ENCODE measurements at regions of chr16 and their contacts with region 1.

Region 1: DNA sequence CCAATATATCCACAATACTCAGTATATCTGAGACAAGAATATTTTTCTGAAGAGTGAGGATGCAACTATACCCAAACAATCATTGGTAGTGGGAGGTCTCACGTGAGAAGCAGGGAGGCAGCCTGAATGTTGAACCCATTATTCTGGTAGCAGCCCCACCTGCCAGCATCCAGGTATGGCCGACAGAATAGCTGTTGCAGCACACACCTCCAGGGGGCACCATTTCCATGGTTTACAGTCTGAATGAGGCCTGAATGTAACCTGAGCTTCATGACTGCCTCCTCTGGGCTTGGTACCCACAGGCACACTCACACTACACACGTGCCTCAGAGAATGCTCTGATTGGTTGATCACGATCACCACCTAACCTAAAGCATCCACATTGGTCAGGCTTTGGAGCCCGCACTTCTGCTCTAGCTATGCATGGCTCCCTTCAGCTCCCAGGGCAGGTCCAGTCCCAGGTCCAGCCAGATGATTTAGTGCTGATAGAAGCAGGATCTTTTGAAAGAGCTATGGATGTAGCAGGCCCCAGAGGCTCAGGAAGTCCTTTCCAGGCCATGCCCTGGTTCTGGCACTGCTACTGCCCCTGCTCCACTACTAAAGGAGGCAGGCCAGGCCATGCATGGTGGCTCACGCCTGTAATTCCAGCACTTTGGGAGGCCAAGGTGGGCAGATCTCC is 11.0 kb upstream of the CBFB start:
- DNase-seq: peak; percentile 58 to 87 (median 84)
- ATAC-seq: peak; percentile 96
- H3K4me3 ChIP-seq: no peak overlapping the region
- H3K4me3 Mint-ChIP-seq: peak overlapping the region in 2 of 10 donors; percentile 16 to 21
- H3K27ac ChIP-seq: no peak overlapping the region
- H3K27ac Mint-ChIP-seq: peak overlapping the region in 2 of 9 donors; percentile 43 to 75
- H3K4me1 ChIP-seq: peaks cover 4 to 11% of the 10 kb centered on the region in 2 donors
- H3K4me1 Mint-ChIP-seq: peaks cover 0 to 55% (median 8%) of the 10 kb centered on the region in 7 donors
- H3K27me3 ChIP-seq: no peaks in the 10 kb centered on the region
- H3K27me3 Mint-ChIP-seq: no peaks in the 10 kb centered on the region

Region 2: GRCh38 chr16:66894948-66895688 is 122.8 kb before region 1 on chr16:
- CTCF ChIA-PET with region 1: no interaction called
- POLR2A ChIA-PET with region 1: no interaction called
- intact Hi-C with region 1: loop called in 1 of 2 experiments (anchors 10 kb)
- DNase-seq: peak; percentile 22 to 63 (median 51)
- ATAC-seq: peak; percentile 90
- H3K4me3 ChIP-seq: no peak overlapping the region
- H3K4me3 Mint-ChIP-seq: no peak overlapping the region
- H3K27ac ChIP-seq: no peak overlapping the region
- H3K27ac Mint-ChIP-seq: peak overlapping the region in 1 of 9 donors; percentile 71
- H3K4me1 ChIP-seq: peaks cover 0 to 3% of the 10 kb centered on the region in 2 donors
- H3K4me1 Mint-ChIP-seq: peaks cover 0 to 28% (median 12%) of the 10 kb centered on the region in 7 donors
- H3K27me3 ChIP-seq: no peaks in the 10 kb centered on the region
- H3K27me3 Mint-ChIP-seq: no peaks in the 10 kb centered on the region

Region 3: GRCh38 chr16:66984892-66985311 is 33.0 kb before region 1 on chr16:
- CTCF ChIA-PET with region 1: no interaction called
- POLR2A ChIA-PET with region 1: no interaction called
- intact Hi-C with region 1: no loop called
- DNase-seq: peak in 1 of 9 donors; percentile 70
- ATAC-seq: peak; percentile 26
- H3K4me3 ChIP-seq: no peak overlapping the region
- H3K4me3 Mint-ChIP-seq: peak overlapping the region in 4 of 10 donors; percentile 6 to 58 (median 22)
- H3K27ac ChIP-seq: peak overlapping the region; percentile 53
- H3K27ac Mint-ChIP-seq: peak overlapping the region; percentile 48 to 98 (median 83)
- H3K4me1 ChIP-seq: peaks cover 17 to 18% of the 10 kb centered on the region in 2 donors
- H3K4me1 Mint-ChIP-seq: peaks cover 6 to 67% (median 17%) of the 10 kb centered on the region in 7 donors
- H3K27me3 ChIP-seq: no peaks in the 10 kb centered on the region
- H3K27me3 Mint-ChIP-seq: no peaks in the 10 kb centered on the region

Region 4: DNA sequence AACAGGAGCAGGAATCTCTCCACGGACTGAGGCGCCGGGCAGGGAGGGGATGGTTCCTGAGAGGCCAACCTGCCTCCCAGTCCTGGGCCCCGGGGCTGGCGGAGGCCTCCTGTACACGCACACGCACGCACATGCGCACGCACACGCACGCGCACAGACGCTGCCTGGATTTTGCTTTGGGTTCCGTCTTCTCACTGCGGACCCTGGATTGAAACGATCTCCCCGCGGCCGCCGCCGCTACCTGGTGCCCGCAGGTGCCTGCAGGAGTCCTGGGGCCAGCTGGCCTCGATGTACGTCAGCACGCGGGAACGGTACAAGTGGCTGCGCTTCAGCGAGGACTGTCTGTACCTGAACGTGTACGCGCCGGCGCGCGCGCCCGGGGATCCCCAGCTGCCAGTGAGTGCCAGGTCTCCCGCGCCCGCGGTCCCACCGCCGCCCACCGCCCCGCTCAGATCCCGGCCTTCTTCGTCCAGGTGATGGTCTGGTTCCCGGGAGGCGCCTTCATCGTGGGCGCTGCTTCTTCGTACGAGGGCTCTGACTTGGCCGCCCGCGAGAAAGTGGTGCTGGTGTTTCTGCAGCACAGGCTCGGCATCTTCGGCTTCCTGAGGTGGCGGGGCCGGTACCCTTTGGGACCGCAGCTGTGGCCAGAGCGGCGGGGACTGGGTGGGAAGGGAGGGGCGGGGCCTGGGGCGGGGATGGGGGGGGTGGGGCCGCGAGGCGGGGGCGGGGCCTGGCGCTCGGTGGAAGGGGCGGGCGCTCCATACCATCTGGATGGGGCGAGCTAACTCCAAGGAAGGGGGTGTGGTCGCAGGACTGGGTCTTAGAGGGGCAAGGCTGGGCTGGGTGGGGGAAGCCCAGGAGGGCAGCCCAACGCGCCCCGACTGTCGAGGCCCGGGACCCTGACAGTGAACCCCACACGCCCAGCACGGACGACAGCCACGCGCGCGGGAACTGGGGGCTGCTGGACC is 17.3 kb before region 1 on chr16:
- CTCF ChIA-PET with region 1: interaction called, 5 read pairs
- POLR2A ChIA-PET with region 1: no interaction called
- intact Hi-C with region 1: loop called (anchors 1 to 2 kb)
- DNase-seq: peak; percentile 39 to 73 (median 61)
- ATAC-seq: peak; percentile 81
- H3K4me3 ChIP-seq: peak overlapping the region; percentile 75
- H3K4me3 Mint-ChIP-seq: peak overlapping the region; percentile 65 to 88 (median 84)
- H3K27ac ChIP-seq: peak overlapping the region; percentile 72
- H3K27ac Mint-ChIP-seq: peak overlapping the region; percentile 68 to 89 (median 80)
- H3K4me1 ChIP-seq: peaks cover 4 to 9% of the 10 kb centered on the region in 2 donors
- H3K4me1 Mint-ChIP-seq: peaks cover 6 to 42% (median 14%) of the 10 kb centered on the region in 7 donors
- H3K27me3 ChIP-seq: no peaks in the 10 kb centered on the region
- H3K27me3 Mint-ChIP-seq: no peaks in the 10 kb centered on the region

Region 5: GRCh38 chr16:67104061-67104460 is 86.1 kb after region 1 on chr16:
- CTCF ChIA-PET with region 1: interaction called, 36 read pairs
- POLR2A ChIA-PET with region 1: interaction called, 3 read pairs
- intact Hi-C with region 1: loop called (anchors 1 kb)
- DNase-seq: no peak
- ATAC-seq: no peak
- H3K4me3 ChIP-seq: no peak overlapping the region
- H3K4me3 Mint-ChIP-seq: no peak overlapping the region
- H3K27ac ChIP-seq: no peak overlapping the region
- H3K27ac Mint-ChIP-seq: peak overlapping the region in 4 of 9 donors; percentile 18 to 79 (median 44)
- H3K4me1 ChIP-seq: peaks cover 2 to 3% of the 10 kb centered on the region in 2 donors
- H3K4me1 Mint-ChIP-seq: peaks cover 0 to 8% (median 0%) of the 10 kb centered on the region in 7 donors
- H3K27me3 ChIP-seq: no peaks in the 10 kb centered on the region
- H3K27me3 Mint-ChIP-seq: no peaks in the 10 kb centered on the region

Region 6: DNA sequence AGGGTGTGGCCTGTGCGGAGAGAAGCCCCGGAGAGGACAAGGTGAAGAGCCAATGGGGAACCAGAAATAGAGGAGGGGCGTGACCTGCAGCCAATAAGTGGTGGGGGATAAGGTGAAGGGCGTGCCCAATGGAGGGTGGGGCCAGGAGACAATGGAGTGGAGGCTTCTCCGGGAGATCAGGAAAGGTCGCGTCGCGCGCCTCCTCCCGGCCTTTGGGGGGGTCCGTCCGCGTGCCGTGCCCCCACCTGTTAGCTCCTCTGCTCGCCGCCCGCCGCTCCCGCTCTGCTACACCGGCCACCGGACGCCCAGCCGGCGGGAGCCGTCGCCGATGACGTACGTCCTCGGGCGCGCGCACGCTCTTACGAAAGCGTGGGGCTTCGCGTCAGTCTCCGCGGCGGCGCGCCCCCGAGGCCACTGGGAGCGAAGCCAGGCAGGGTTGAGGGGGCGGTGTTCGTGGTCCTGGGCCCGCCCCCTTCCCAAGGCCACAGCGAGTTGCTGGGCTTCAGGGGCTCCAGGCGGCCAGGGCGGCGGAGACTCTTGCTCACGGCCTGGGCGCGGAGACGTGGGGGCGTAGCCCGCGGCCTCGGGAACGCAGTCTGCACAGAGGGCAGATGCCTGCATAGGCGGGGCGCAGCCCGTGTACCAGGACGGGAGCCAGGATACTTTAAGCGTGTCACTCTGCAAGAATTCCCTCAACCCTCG is 165.8 kb after region 1 on chr16 and contains the start of gene MATCAP1:
- CTCF ChIA-PET with region 1: interaction called, 15 read pairs
- POLR2A ChIA-PET with region 1: interaction called, 4 read pairs
- intact Hi-C with region 1: loop called (anchors 1 kb)
- DNase-seq: peak; percentile 90 to 98 (median 96)
- ATAC-seq: peak; percentile 97
- H3K4me3 ChIP-seq: peak within 1 kb of the TSS; percentile 79
- H3K4me3 Mint-ChIP-seq: peak within 1 kb of the TSS in 5 of 10 donors; percentile 48 to 91 (median 86)
- H3K27ac ChIP-seq: peak within 1 kb of the TSS; percentile 97
- H3K27ac Mint-ChIP-seq: peak within 1 kb of the TSS in 2 of 9 donors; percentile 58 to 67
- H3K4me1 ChIP-seq: peaks cover 12 to 15% of the 10 kb centered on the region in 2 donors
- H3K4me1 Mint-ChIP-seq: peaks cover 8 to 24% (median 13%) of the 10 kb centered on the region in 7 donors
- H3K27me3 ChIP-seq: no peaks in the 10 kb centered on the region
- H3K27me3 Mint-ChIP-seq: peaks cover 4 to 15% (median 4%) of the 10 kb centered on the region in 5 donors
- total RNA-seq, gene MATCAP1: 4.3 to 88.1 (median 11.0) TPM

Measured in naive thymus-derived CD4-positive, alpha-beta T cell (primary cell).